ENCODE measurements at regions of chr11 and their contacts with region 1.

Region 1: DNA sequence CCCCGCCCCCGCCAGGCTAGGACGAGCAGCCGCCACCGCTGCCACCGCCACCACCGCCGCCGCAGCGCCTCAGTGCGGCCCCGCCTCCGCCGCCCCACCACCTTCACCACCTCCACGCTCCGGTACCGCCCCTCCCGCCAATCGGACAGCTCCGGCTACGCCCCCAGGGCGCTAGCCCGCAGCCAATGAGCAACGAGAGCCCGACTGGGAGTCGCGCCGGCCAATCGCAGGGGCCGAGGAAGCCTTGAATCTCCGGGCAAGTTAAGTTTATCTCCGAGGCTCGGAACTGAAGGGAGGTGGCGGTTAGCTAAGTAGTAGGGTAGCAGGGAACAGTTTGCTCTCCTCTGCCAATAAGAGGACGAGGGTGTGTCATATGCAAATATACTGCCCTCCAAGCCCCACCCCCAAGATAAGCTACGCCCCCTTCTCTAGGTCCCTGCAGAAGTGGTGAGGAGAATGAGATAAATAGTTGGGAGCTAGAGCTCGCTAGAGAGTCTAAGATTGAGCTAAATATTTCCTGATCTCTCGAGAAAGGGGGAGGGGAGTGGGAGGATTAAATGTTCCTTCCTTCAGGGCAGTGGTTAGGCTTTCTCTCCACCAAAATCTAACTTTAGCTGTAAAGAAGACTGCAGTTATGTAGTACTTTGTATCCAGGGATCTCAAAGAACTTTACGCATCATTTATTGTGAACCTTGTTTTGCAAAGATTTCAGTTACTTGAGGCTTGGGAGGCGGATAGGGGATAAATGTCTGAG is at the start of gene SESN3:
- DNase-seq: peak; percentile 99
- H3K4me3 Mint-ChIP-seq: no peak within 1 kb of the TSS
- H3K27ac Mint-ChIP-seq: peak within 1 kb of the TSS; percentile 83
- H3K4me1 Mint-ChIP-seq: peaks cover 52% of the 10 kb centered on the region
- H3K27me3 Mint-ChIP-seq: no peaks in the 10 kb centered on the region
- total RNA-seq, gene SESN3: 17.5 to 18.1 TPM

Region 2: DNA sequence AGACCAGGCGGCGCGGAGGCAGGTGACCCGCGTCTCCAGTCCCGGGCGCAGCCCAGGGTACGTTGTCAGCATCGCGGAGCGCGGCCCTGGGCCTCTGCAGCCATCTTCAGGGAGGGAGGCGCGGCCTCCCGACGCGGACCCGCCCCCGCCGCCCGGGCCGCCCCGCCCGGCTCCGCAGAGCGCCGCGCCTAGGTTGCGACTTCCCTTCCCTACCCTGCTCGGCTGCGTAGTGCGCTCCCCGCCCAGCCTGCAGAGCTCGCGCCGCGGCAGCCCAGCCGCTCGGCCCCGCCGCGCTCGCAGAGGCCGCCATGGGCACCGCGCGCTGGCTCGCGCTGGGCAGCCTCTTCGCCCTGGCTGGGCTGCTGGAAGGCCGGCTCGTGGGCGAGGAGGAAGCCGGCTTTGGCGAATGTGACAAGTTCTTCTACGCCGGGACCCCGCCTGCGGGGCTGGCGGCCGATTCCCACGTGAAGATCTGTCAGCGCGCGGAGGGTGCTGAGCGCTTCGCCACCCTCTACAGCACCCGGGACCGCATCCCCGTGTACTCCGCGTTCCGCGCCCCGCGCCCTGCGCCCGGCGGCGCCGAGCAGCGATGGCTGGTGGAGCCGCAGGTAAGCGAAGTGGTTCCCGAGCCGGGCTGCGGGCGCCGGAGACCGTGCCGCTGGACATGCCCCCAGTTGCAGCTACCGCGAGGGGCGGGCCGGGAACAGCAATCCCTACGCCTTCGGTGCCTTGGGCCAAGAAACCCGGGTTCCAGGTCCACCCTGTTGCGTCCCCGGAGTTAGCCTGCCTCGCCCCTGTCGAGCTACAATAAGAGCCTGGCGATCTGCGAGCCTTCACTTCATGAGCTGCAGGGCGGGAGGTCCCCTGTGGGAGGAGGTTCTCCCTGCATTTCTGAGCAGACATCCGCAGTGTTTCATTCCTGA is 141.4 kb before region 1 on chr11 and contains the start of gene ENDOD1:
- CTCF ChIA-PET with region 1: interaction called, 3 read pairs
- intact Hi-C with region 1: loop called (anchors 1 kb)
- DNase-seq: peak; percentile 82
- H3K4me3 Mint-ChIP-seq: peak within 1 kb of the TSS; percentile 86
- H3K27ac Mint-ChIP-seq: peak within 1 kb of the TSS; percentile 87
- H3K4me1 Mint-ChIP-seq: peaks cover 64% of the 10 kb centered on the region
- H3K27me3 Mint-ChIP-seq: no peaks in the 10 kb centered on the region
- total RNA-seq, gene ENDOD1: 14.5 to 15.2 TPM

Region 3: GRCh38 chr11:95241681-95242081 is 10.4 kb after region 1 on chr11:
- CTCF ChIA-PET with region 1: interaction called, 19 read pairs
- intact Hi-C with region 1: no loop called
- DNase-seq: no peak
- H3K4me3 Mint-ChIP-seq: no peak overlapping the region
- H3K27ac Mint-ChIP-seq: no peak overlapping the region
- H3K4me1 Mint-ChIP-seq: peaks cover 28% of the 10 kb centered on the region
- H3K27me3 Mint-ChIP-seq: no peaks in the 10 kb centered on the region

Region 4: DNA sequence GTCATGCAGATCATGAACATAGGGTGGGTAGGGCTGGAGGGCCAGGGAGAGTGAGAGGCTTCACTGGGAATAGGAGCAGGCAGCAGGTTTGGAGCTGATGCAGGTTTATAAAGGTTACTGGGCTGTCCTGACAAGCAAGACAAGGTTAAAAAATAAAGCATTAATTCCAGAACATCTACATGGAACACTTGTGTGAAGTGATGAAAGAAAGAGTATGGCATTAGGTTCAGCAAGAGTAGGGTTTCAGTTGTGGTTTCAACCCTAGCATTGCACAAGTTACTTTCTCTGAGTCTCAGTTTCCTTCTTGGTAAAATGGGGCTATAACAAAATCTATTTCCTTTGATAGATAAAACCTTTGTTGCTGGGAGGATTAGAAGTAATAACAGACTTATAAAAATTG is 114.3 kb after region 1 on chr11:
- CTCF ChIA-PET with region 1: interaction called, 3 read pairs
- intact Hi-C with region 1: loop called (anchors 1 kb)
- DNase-seq: peak; percentile 29
- H3K4me3 Mint-ChIP-seq: no peak overlapping the region
- H3K27ac Mint-ChIP-seq: no peak overlapping the region
- H3K4me1 Mint-ChIP-seq: peaks cover 18% of the 10 kb centered on the region
- H3K27me3 Mint-ChIP-seq: no peaks in the 10 kb centered on the region

Region 5: DNA sequence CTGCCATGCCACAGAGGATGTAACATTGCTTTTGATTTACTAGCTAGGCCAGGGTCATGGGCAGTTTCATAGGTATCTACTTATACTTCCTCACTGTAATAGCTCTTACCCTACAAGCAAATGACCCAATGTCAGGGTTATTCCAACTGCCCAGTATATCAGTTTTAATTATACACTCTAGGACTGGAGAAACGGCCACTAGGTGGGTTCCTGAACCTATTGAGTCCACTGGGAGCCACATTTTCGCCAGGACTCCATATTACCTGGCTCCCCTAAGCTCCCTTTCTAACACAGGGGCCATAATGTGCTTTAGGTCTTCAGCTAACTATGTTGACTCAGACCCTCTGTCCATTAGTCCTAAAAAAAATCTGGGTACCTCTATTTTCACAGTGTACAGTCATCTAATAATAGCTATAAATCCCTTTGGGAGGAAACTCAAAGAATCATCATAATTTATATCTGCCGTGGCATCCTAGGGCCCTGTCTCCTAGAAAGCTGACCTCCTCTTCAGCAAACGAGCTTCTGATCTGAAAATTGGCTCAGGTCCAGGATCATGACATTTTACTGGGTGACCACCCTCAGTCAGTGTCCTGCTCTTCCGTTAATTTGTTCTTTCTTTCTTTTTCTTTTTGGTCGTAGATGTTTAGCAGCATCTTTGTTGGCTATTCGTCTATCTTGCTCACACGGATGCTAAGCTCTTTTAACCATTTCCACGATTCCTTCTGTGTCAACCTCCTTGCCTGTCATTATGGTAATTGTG is 314.0 kb after region 1 on chr11:
- CTCF ChIA-PET with region 1: no interaction called
- intact Hi-C with region 1: no loop called
- DNase-seq: no peak
- H3K4me3 Mint-ChIP-seq: no peak overlapping the region
- H3K27ac Mint-ChIP-seq: no peak overlapping the region
- H3K4me1 Mint-ChIP-seq: peaks cover 34% of the 10 kb centered on the region
- H3K27me3 Mint-ChIP-seq: no peaks in the 10 kb centered on the region

Region 6: DNA sequence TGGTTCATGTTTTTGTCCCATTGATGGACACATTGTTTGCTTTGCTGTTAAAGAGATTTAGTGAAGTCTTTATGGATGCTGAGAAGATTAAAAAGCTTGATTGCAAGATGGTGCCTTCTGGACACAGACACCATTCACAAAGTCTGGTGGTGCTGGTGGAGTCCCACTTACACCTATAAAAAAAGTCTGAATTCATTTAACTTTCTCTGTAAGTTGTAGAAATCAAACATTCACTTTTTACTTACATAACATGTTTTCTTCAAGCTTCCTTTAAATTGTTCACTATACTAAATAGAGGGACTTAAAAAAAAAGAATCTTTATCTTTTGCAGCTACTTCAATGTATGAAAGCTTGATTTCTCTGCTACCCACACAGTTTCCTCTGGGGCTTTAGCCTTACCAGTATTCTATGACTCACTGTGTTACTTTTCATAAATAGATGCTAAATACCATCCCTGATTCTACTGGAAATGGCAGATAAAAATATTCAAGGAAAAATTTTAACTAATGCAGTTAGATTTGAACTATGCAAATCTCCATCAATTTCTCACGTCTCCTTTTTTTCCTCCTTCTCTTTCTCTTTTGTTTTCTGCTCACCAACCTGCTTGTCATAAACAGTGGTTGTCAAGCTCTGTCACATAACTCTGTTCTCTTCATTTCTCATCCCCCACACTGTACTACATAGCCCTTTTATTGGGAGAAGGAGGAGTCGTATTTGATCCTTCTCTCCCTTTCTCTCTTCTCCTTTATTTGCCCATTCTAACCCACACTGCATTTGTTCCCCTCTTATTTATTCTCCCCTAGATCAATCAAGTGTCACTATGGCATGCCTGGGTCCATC is 468.5 kb after region 1 on chr11:
- CTCF ChIA-PET with region 1: interaction called, 27 read pairs
- intact Hi-C with region 1: loop called (anchors 1 kb)
- DNase-seq: no peak
- H3K4me3 Mint-ChIP-seq: peak overlapping the region; percentile 65
- H3K27ac Mint-ChIP-seq: peak overlapping the region; percentile 92
- H3K4me1 Mint-ChIP-seq: peaks cover 53% of the 10 kb centered on the region
- H3K27me3 Mint-ChIP-seq: no peaks in the 10 kb centered on the region

Region 7: DNA sequence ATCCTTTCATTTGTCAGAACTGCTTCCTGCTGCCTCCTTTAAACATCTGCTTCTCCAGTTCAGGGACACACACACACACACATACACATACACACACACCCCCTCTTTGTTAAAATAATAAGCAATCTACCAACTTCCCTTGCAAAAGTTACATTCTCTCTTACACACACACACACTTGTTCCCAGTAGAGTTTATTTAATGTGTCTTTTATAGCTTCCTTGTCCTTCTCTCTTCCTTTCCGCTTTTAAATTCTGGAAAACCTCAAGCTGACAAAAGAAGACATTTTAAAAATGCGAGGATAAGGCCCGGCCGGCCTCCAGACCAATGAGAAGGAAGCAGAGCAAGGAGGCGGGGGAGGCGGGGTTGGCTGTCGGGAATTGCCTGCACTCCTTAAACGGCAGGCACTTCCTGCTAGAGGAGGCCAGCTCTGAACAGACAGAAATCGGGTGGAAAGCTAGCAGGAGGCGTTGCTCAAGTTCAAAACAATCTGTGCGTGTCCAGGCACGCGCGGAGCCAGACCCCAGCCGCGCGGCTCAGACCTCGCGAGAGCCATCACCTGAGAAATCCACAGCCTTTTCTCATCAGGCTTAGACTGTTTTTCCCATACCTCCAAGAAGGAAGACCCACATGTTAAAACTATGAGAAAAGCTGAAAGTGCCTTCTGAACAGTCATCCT is 1011.8 kb after region 1 on chr11:
- CTCF ChIA-PET with region 1: no interaction called
- intact Hi-C with region 1: loop called (anchors 10 kb)
- DNase-seq: peak; percentile 94
- H3K4me3 Mint-ChIP-seq: peak overlapping the region; percentile 84
- H3K27ac Mint-ChIP-seq: peak overlapping the region; percentile 95
- H3K4me1 Mint-ChIP-seq: peaks cover 54% of the 10 kb centered on the region
- H3K27me3 Mint-ChIP-seq: no peaks in the 10 kb centered on the region